ENCODE measurements at regions of chr1 and their contacts with region 1.

Region 1: GRCh38 chr1:224503161-224504118 is 68.8 kb upstream of the WDR26 start:
- DNase-seq: peak; percentile 90 to 96
- ATAC-seq: peak; percentile 94
- H3K4me3 ChIP-seq: peak overlapping the region in 3 of 4 donors; percentile 8 to 18 (median 15)
- H3K27ac ChIP-seq: peak overlapping the region; percentile 79 to 86 (median 82)
- H3K4me1 ChIP-seq: peaks cover 47 to 55% of the 10 kb centered on the region in 2 donors
- H3K27me3 ChIP-seq: no peaks in the 10 kb centered on the region
- CTCF ChIP-seq: peak in 4 of 5 experiments; percentile 6 to 51 (median 28)
- POLR2A ChIP-seq: peak in 1 of 2 donors; percentile 39

Region 2: DNA sequence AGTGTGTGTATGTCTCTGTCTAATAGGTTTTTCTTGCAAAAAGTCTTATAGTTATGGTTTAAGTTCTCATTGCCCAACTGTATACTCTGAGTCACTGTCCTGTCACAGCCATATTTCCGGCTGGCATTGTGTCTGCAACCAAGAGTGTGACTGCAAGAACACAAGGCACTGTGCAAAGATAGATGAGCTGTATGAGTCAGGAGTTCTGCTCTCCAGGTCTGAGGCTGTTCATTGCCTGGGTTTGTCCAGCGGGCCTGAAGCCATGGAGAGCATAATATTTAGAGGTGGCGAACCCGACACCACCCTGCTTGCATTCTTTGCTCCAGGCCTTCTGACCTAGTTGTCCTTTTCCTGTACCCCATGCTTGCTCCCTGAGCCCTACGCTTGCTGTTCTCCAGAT is 61.7 kb after region 1 on chr1:
- in situ Hi-C with region 1: no loop called
- intact Hi-C with region 1: loop called (anchors 5 kb)
- DNase-seq: peak; percentile 91 to 94
- ATAC-seq: peak; percentile 97 to 99
- H3K4me3 ChIP-seq: no peak overlapping the region
- H3K27ac ChIP-seq: peak overlapping the region; percentile 73 to 94 (median 82)
- H3K4me1 ChIP-seq: peaks cover 23 to 34% of the 10 kb centered on the region in 2 donors
- H3K27me3 ChIP-seq: no peaks in the 10 kb centered on the region
- CTCF ChIP-seq: no peak
- POLR2A ChIP-seq: no peak

Region 3: DNA sequence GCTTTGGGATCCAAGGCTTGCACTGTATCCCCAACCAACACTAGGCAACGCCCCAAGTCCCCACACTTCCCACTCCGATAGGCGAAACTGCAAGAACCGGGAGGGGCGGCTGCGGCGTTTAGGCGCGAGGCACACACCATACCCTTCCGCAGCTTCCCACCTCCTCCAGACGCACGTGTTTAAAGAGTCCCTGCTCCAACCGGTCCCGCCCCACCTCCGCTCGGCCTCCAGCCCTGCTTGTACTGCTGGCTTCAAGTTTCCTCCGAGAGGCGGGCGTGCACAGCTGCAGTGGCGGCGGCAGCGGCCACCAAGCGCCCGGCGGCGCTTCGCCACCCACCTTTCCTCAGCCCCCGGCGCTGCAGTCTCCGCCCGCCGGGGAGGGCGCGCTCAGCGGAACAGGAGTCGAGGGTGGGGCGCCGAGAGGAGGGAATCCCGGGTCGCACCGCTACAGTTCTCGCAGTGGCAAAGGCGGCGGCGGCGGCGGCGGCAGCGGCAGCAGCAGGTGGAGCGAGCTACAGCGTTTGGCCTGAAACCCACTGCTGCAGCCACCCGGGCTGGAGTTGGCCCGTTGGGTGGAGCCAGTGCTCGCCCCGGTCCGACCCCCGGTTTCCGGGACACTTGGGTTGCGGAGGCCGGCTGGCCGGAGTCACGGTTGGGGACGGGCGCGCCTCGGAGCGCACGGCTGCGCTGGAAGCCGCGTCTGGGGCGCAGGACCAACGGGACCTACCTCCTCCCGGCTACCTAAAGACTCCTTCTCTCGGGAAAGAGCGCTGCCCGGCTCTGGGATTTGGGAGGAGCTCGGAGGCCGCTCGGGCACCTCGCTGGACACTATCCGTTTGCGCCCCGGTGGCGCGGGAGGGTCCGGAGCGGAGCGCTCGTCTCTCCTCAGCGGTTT is 112.7 kb after region 1 on chr1 and contains the start of gene CNIH3:
- in situ Hi-C with region 1: no loop called
- intact Hi-C with region 1: loop called (anchors 5 kb)
- DNase-seq: peak; percentile 34 to 55
- ATAC-seq: peak; percentile 68 to 88
- H3K4me3 ChIP-seq: peak within 1 kb of the TSS; percentile 58 to 65 (median 64)
- H3K27ac ChIP-seq: peak within 1 kb of the TSS in 2 of 4 donors; percentile 11 to 31
- H3K4me1 ChIP-seq: peaks cover 12 to 18% of the 10 kb centered on the region in 2 donors
- H3K27me3 ChIP-seq: peaks cover 34 to 44% (median 34%) of the 10 kb centered on the region in 3 donors
- CTCF ChIP-seq: peak in 1 of 5 experiments; percentile 16
- POLR2A ChIP-seq: peak in 1 of 2 donors; percentile 33
- total RNA-seq, gene CNIH3: 0.95 to 1.6 (median 1.5) TPM in 3 of 4 donors, not detected in the other

Region 4: DNA sequence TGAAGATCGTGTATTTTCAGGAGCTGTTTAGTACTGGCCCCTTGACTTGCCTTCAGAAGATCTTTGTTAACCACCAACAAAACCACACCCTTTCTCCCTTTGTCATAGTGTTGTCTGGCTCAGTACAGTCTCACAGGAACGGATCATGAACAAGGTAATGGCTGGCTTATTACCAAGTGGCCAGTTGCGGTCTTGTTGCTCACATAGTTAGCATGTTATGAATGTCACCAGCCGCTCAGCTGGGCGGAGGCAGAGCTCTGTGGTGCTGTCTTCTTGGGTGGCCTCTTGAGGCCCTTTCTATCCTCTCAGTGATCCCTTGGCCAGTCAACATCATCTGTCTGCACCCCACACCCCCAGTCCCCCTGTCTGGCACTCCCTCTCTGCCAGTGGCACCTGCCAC is 134.1 kb after region 1 on chr1:
- in situ Hi-C with region 1: loop called in 1 of 4 experiments (anchors 5 kb)
- intact Hi-C with region 1: no loop called
- DNase-seq: peak; percentile 17 to 42
- ATAC-seq: peak; percentile 76
- H3K4me3 ChIP-seq: no peak overlapping the region
- H3K27ac ChIP-seq: no peak overlapping the region
- H3K4me1 ChIP-seq: peaks cover 0 to 3% of the 10 kb centered on the region in 2 donors
- H3K27me3 ChIP-seq: no peaks in the 10 kb centered on the region
- CTCF ChIP-seq: no peak
- POLR2A ChIP-seq: no peak

Region 5: DNA sequence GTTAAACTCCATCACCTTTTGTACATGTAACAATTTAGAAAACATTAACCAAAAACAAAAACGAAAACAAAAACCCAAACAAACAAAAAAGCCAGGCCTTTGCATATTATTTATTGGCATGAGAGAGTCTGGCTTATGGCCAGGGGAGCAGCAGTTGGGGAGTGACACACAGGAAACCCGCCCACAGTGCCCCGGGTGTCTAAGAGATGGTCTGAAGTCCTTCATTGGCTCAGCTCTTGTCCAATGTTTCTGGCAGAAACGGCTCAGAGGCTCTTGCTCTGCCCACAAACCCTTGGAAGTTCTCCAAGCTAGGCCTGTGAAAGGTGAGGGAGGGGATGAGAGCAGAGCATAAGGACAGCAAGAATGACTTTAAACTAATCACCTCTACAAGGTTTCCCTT is 244.1 kb after region 1 on chr1:
- in situ Hi-C with region 1: no loop called
- intact Hi-C with region 1: loop called (anchors 10 kb)
- DNase-seq: no peak
- ATAC-seq: no peak
- H3K4me3 ChIP-seq: no peak overlapping the region
- H3K27ac ChIP-seq: no peak overlapping the region
- H3K4me1 ChIP-seq: peaks cover 11 to 15% of the 10 kb centered on the region in 2 donors
- H3K27me3 ChIP-seq: no peaks in the 10 kb centered on the region
- CTCF ChIP-seq: no peak
- POLR2A ChIP-seq: no peak

Measured in gastrocnemius medialis (tissue), 4 donors.